IMR-90 (cell line): ENCODE measurements at regions of chr14 and their contacts with region 1.

Region 1: GRCh38 chr14:80850197-80850814 is 91.2 kb downstream of the CEP128 start:
- DNase-seq: peak; percentile 68
- ATAC-seq: peak; percentile 78
- H3K4me3 ChIP-seq: no peak overlapping the region
- H3K27ac ChIP-seq: no peak overlapping the region
- H3K4me1 ChIP-seq: peaks cover 2% of the 10 kb centered on the region; the same call in 1 of the 2 replicates
- H3K27me3 ChIP-seq: no peaks in the 10 kb centered on the region
- CTCF ChIP-seq: peak; percentile 75
- POLR2A ChIP-seq: no peak
- RAD21 ChIP-seq: peak; percentile 78

Region 2: DNA sequence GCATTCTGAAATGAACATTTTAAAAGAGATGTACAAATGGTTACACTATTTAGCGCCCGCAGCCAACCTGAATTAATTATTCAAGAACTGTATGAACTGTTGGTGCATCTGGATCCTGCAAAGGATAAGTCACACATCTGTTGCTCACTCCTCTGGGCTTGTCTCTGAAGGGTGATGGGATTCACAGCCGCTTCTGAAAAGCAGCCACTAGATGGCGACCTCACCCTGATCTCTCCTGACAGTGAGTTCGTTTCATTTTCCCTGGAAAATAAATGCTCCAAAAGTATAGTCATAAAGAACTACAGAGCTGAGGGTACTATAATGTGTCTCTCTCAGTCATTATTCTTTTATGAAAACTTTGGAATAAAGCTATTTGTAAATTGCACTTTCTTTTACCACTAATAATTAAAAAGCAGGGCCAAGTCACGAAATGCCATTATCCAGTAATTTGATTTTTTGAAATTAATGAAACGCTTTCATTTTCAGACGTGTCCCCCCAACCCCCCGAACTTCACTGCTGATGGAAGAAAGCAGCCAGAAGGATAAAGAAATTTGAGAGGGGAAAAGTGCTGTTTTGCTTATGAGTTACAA is 1890.5 kb before region 1 on chr14:
- CTCF ChIA-PET with region 1: interaction called, 3 read pairs
- POLR2A ChIA-PET with region 1: no interaction called
- dilution Hi-C with region 1: no loop called
- in situ Hi-C with region 1: loop called (anchors 25 kb)
- intact Hi-C with region 1: no loop called
- DNase-seq: peak; percentile 82
- ATAC-seq: peak; percentile 97
- H3K4me3 ChIP-seq: no peak overlapping the region
- H3K27ac ChIP-seq: no peak overlapping the region
- H3K4me1 ChIP-seq: no peaks in the 10 kb centered on the region
- H3K27me3 ChIP-seq: no peaks in the 10 kb centered on the region
- CTCF ChIP-seq: peak; percentile 87
- POLR2A ChIP-seq: no peak
- RAD21 ChIP-seq: peak; percentile 86

Region 3: GRCh38 chr14:79011091-79011919 is 1839.0 kb before region 1 on chr14:
- CTCF ChIA-PET with region 1: no interaction called
- POLR2A ChIA-PET with region 1: no interaction called
- dilution Hi-C with region 1: no loop called
- in situ Hi-C with region 1: no loop called
- intact Hi-C with region 1: loop called (anchors 2 kb)
- DNase-seq: peak; percentile 84
- ATAC-seq: peak; percentile 86
- H3K4me3 ChIP-seq: no peak overlapping the region
- H3K27ac ChIP-seq: no peak overlapping the region
- H3K4me1 ChIP-seq: no peaks in the 10 kb centered on the region; the same call in 1 of the 2 replicates
- H3K27me3 ChIP-seq: no peaks in the 10 kb centered on the region
- CTCF ChIP-seq: peak; percentile 56
- POLR2A ChIP-seq: no peak
- RAD21 ChIP-seq: peak; percentile 63

Region 4: GRCh38 chr14:79584679-79585078 is 1265.6 kb before region 1 on chr14:
- CTCF ChIA-PET with region 1: no interaction called
- POLR2A ChIA-PET with region 1: no interaction called
- dilution Hi-C with region 1: no loop called
- in situ Hi-C with region 1: no loop called
- intact Hi-C with region 1: loop called (anchors 10 kb)
- DNase-seq: peak; percentile 98
- ATAC-seq: peak; percentile 79
- H3K4me3 ChIP-seq: no peak overlapping the region
- H3K27ac ChIP-seq: peak overlapping the region; percentile 85
- H3K4me1 ChIP-seq: peaks cover 14% of the 10 kb centered on the region
- H3K27me3 ChIP-seq: no peaks in the 10 kb centered on the region
- CTCF ChIP-seq: peak; percentile 53
- POLR2A ChIP-seq: no peak
- RAD21 ChIP-seq: peak; percentile 59

Region 5: GRCh38 chr14:80434574-80435321 is 415.6 kb before region 1 on chr14:
- CTCF ChIA-PET with region 1: no interaction called
- POLR2A ChIA-PET with region 1: no interaction called
- dilution Hi-C with region 1: no loop called
- in situ Hi-C with region 1: no loop called
- intact Hi-C with region 1: no loop called
- DNase-seq: peak; percentile 45
- ATAC-seq: no peak
- H3K4me3 ChIP-seq: no peak overlapping the region
- H3K27ac ChIP-seq: no peak overlapping the region
- H3K4me1 ChIP-seq: no peaks in the 10 kb centered on the region
- H3K27me3 ChIP-seq: no peaks in the 10 kb centered on the region
- CTCF ChIP-seq: no peak
- POLR2A ChIP-seq: no peak
- RAD21 ChIP-seq: no peak

Region 6: GRCh38 chr14:80587075-80587724 is 263.1 kb before region 1 on chr14:
- CTCF ChIA-PET with region 1: interaction called, 9 read pairs
- POLR2A ChIA-PET with region 1: no interaction called
- dilution Hi-C with region 1: no loop called
- in situ Hi-C with region 1: no loop called
- intact Hi-C with region 1: loop called (anchors 5 kb)
- DNase-seq: peak; percentile 48
- ATAC-seq: peak; percentile 74; the same call in 1 of the 2 replicates
- H3K4me3 ChIP-seq: no peak overlapping the region
- H3K27ac ChIP-seq: no peak overlapping the region
- H3K4me1 ChIP-seq: peaks cover 1% of the 10 kb centered on the region; the same call in 1 of the 2 replicates
- H3K27me3 ChIP-seq: no peaks in the 10 kb centered on the region
- CTCF ChIP-seq: peak; percentile 54
- POLR2A ChIP-seq: no peak
- RAD21 ChIP-seq: peak; percentile 59